HCT116 (cell line): ENCODE measurements at regions of chr19 and their contacts with region 1.

Region 1: DNA sequence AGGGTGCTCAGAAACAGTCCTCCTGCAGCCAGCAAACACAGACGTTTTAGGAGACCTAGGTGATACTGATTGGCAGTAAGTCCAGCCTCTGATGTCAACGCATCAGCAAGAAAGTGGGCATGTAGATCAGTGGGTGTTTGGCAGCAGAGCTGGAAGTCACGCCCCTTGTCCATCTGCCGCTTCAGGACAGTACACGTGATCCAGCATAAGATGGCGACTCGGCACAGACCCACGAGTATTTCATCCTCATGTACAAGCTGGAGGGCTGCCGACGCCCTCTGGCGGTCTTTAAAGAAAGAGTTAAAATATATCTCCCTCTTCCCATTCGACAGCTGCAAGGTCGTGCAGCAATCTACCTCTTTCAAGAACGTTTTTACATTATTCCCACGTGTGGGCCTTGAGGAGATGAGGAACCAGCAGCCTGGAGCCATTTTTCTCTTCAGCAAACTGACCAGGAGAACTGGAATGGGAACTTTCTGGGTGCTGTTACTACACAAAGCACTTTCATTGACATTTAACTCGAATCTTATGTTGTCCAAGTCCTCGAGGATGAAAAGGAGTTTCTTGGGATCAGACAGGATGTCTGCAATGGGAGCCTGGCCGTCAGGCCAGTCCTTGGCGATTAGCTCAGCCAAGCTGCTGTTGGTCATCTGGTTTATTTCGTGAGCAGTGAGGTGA is 22.3 kb downstream of the NLRP11 start:
- DNase-seq: peak; percentile 90
- ATAC-seq: peak; percentile 95
- H3K4me3 ChIP-seq: no peak overlapping the region
- H3K27ac ChIP-seq: no peak overlapping the region
- H3K4me1 ChIP-seq: peaks cover 0 to 7% of the 10 kb centered on the region in 2 experiments; a peak in 2 of 4 replicates
- H3K27me3 ChIP-seq: no peaks in the 10 kb centered on the region
- CTCF ChIP-seq: peak; percentile 55 to 66 (median 58)
- POLR2A ChIP-seq: no peak
- RAD21 ChIP-seq: peak; percentile 70

Region 2: GRCh38 chr19:55703790-55704215 is 105.7 kb before region 1 on chr19:
- CTCF ChIA-PET with region 1: interaction called, 6 read pairs
- POLR2A ChIA-PET with region 1: no interaction called
- RAD21 ChIA-PET with region 1: no interaction called
- intact Hi-C with region 1: loop called (anchors 1 kb)
- DNase-seq: peak; percentile 4
- ATAC-seq: peak; percentile 92
- H3K4me3 ChIP-seq: no peak overlapping the region
- H3K27ac ChIP-seq: no peak overlapping the region
- H3K4me1 ChIP-seq: no peaks in the 10 kb centered on the region
- H3K27me3 ChIP-seq: 0 out of 2 replicates have a peak, but pooled peaks cover 4% of the 10 kb centered on the region
- CTCF ChIP-seq: peak; percentile 30 to 97 (median 93); a peak in 4 of 6 replicates
- POLR2A ChIP-seq: no peak
- RAD21 ChIP-seq: peak; percentile 42; the same call in 1 of the 2 replicates

Region 3: GRCh38 chr19:55777528-55777927 is 32.0 kb before region 1 on chr19:
- CTCF ChIA-PET with region 1: interaction called, 12 read pairs
- POLR2A ChIA-PET with region 1: no interaction called
- RAD21 ChIA-PET with region 1: no interaction called
- intact Hi-C with region 1: no loop called
- DNase-seq: peak; percentile 2
- ATAC-seq: peak; percentile 52; the same call in 1 of the 2 replicates
- H3K4me3 ChIP-seq: no peak overlapping the region
- H3K27ac ChIP-seq: no peak overlapping the region
- H3K4me1 ChIP-seq: no peaks in the 10 kb centered on the region
- H3K27me3 ChIP-seq: peaks cover 13% of the 10 kb centered on the region; the same call in 1 of the 2 replicates
- CTCF ChIP-seq: peak; percentile 34 to 71 (median 63); a peak in 5 of 6 replicates
- POLR2A ChIP-seq: no peak
- RAD21 ChIP-seq: peak; percentile 55

Region 4: GRCh38 chr19:55830656-55831055 is 21.1 kb after region 1 on chr19:
- CTCF ChIA-PET with region 1: interaction called, 17 read pairs
- POLR2A ChIA-PET with region 1: no interaction called
- RAD21 ChIA-PET with region 1: no interaction called
- intact Hi-C with region 1: no loop called
- DNase-seq: peak; percentile 41
- ATAC-seq: no peak
- H3K4me3 ChIP-seq: no peak overlapping the region
- H3K27ac ChIP-seq: no peak overlapping the region
- H3K4me1 ChIP-seq: no peaks in the 10 kb centered on the region
- H3K27me3 ChIP-seq: no peaks in the 10 kb centered on the region
- CTCF ChIP-seq: no peak
- POLR2A ChIP-seq: no peak
- RAD21 ChIP-seq: no peak